ENCODE measurements at regions of chr22 and their contacts with region 1.

Region 1: DNA sequence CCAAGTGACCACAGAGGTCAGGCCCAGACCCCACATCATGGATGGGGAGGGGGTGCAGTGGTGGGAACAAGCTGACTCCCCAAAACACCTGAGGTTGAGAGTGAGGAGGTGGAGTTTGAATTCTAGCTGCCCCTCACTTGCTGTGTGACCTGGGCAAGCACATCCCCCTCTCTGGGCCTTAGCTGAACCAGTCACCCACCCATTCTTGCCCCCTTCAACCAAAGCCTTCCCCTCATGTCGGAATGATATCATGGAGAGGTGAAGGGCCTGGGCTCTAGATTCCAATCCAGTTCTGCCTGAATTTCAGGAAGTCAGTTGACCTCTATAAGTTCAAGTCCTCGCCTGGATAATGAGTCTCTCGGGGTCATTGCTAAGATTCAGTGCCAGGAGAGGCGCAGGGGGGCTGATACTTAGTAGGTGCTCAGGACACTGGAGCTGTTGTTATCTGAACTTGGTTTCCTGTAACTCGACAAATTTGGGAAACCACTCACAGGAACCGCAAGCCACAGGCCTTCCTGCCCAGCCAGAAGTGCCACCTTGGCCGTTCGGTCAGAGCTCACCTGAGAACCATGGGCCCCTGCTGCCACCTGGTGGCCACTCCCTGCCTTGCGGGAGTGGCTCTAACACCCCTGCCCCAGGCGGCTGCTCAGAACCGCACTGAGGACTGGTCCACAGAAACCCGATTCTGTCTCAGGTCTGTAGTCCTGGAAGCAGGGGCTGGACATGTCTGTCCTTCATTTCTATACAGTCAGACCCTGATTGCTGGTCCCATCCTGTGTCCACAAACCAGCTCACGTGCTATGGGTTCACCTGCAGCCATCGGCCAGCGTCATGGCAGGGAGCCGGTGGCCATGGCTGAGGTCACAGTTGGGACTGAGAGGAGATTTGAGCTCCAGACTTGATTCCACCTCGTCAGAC is 6.9 kb downstream of the CDC42EP1 start:
- DNase-seq: peak; percentile 91
- ATAC-seq: peak; percentile 93
- H3K4me3 ChIP-seq: peak overlapping the region in 2 of 5 experiments; percentile 4 to 40
- H3K4me3 Mint-ChIP-seq: peak overlapping the region; percentile 74
- H3K27ac ChIP-seq: peak overlapping the region; percentile 25 to 44
- H3K27ac Mint-ChIP-seq: peak overlapping the region; percentile 68
- H3K4me1 ChIP-seq: peaks cover 22 to 27% of the 10 kb centered on the region in 2 donors
- H3K4me1 Mint-ChIP-seq: peaks cover 22% of the 10 kb centered on the region
- H3K27me3 ChIP-seq: peaks cover 0 to 22% (median 8%) of the 10 kb centered on the region in 4 experiments
- H3K27me3 Mint-ChIP-seq: peaks cover 30% of the 10 kb centered on the region
- CTCF ChIP-seq: peak; percentile 95

Region 2: DNA sequence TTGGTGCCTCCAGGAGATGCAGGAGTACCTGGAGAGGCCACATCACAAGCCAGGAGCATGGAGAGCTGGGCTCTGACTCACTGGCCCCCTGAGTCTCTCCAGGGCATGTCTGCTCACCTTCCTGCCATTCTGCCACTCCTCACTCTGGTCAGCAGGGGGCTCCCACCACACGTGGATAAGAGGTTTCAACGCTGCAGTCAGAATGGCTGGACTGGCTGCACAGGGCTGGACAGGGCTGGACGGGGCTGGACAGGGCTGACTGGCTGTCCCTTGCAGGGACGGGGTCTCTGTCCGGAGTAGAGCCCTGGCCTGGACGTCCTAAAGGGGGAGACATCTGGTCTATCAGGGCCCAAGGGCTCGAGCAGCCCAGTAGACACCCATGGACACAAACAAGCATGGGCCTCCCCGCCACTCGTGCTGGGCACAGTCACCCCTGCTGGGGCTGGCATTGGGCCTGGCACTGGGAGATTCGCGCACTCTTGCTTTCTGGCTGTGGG is 250.2 kb before region 1 on chr22:
- CTCF ChIA-PET with region 1: interaction called, 26 read pairs
- POLR2A ChIA-PET with region 1: no interaction called
- intact Hi-C with region 1: loop called (anchors 1 kb)
- DNase-seq: peak; percentile 83
- ATAC-seq: peak; percentile 86
- H3K4me3 ChIP-seq: no peak overlapping the region
- H3K4me3 Mint-ChIP-seq: no peak overlapping the region
- H3K27ac ChIP-seq: no peak overlapping the region
- H3K27ac Mint-ChIP-seq: no peak overlapping the region
- H3K4me1 ChIP-seq: peaks cover 20 to 29% of the 10 kb centered on the region in 2 donors
- H3K4me1 Mint-ChIP-seq: peaks cover 32% of the 10 kb centered on the region
- H3K27me3 ChIP-seq: peaks cover 0 to 3% (median 0%) of the 10 kb centered on the region in 4 experiments
- H3K27me3 Mint-ChIP-seq: peaks cover 12% of the 10 kb centered on the region
- CTCF ChIP-seq: peak; percentile 85

Region 3: GRCh38 chr22:37472418-37473006 is 94.7 kb before region 1 on chr22:
- CTCF ChIA-PET with region 1: interaction called, 56 read pairs
- POLR2A ChIA-PET with region 1: no interaction called
- intact Hi-C with region 1: loop called (anchors 1 kb)
- DNase-seq: peak; percentile 53
- ATAC-seq: no peak
- H3K4me3 ChIP-seq: no peak overlapping the region
- H3K4me3 Mint-ChIP-seq: no peak overlapping the region
- H3K27ac ChIP-seq: no peak overlapping the region
- H3K27ac Mint-ChIP-seq: no peak overlapping the region
- H3K4me1 ChIP-seq: no peaks in the 10 kb centered on the region
- H3K4me1 Mint-ChIP-seq: peaks cover 10% of the 10 kb centered on the region
- H3K27me3 ChIP-seq: no peaks in the 10 kb centered on the region
- H3K27me3 Mint-ChIP-seq: no peaks in the 10 kb centered on the region
- CTCF ChIP-seq: peak; percentile 60

Region 4: GRCh38 chr22:37538590-37539357 is 28.4 kb before region 1 on chr22:
- CTCF ChIA-PET with region 1: interaction called, 278 read pairs
- POLR2A ChIA-PET with region 1: interaction called, 12 read pairs
- intact Hi-C with region 1: loop called (anchors 1 kb)
- DNase-seq: peak; percentile 90
- ATAC-seq: peak; percentile 100
- H3K4me3 ChIP-seq: no peak overlapping the region
- H3K4me3 Mint-ChIP-seq: peak overlapping the region; percentile 32
- H3K27ac ChIP-seq: no peak overlapping the region
- H3K27ac Mint-ChIP-seq: peak overlapping the region; percentile 21
- H3K4me1 ChIP-seq: peaks cover 20 to 29% of the 10 kb centered on the region in 2 donors
- H3K4me1 Mint-ChIP-seq: peaks cover 24% of the 10 kb centered on the region
- H3K27me3 ChIP-seq: peaks cover 0 to 6% (median under 1%) of the 10 kb centered on the region in 4 experiments
- H3K27me3 Mint-ChIP-seq: peaks cover 22% of the 10 kb centered on the region
- CTCF ChIP-seq: peak; percentile 98

Region 5: GRCh38 chr22:37552524-37553163 is 14.5 kb before region 1 on chr22:
- CTCF ChIA-PET with region 1: interaction called, 30 read pairs
- POLR2A ChIA-PET with region 1: no interaction called
- intact Hi-C with region 1: no loop called
- DNase-seq: no peak
- ATAC-seq: no peak
- H3K4me3 ChIP-seq: no peak overlapping the region
- H3K4me3 Mint-ChIP-seq: no peak overlapping the region
- H3K27ac ChIP-seq: no peak overlapping the region
- H3K27ac Mint-ChIP-seq: peak overlapping the region; percentile 56
- H3K4me1 ChIP-seq: no peaks in the 10 kb centered on the region
- H3K4me1 Mint-ChIP-seq: no peaks in the 10 kb centered on the region
- H3K27me3 ChIP-seq: peaks cover 0 to 33% (median 4%) of the 10 kb centered on the region in 4 experiments
- H3K27me3 Mint-ChIP-seq: peaks cover 37% of the 10 kb centered on the region
- CTCF ChIP-seq: no peak

Region 6: GRCh38 chr22:37588546-37589215 is 21.5 kb after region 1 on chr22:
- CTCF ChIA-PET with region 1: interaction called, 43 read pairs
- POLR2A ChIA-PET with region 1: no interaction called
- intact Hi-C with region 1: no loop called
- DNase-seq: no peak
- ATAC-seq: no peak
- H3K4me3 ChIP-seq: no peak overlapping the region
- H3K4me3 Mint-ChIP-seq: no peak overlapping the region
- H3K27ac ChIP-seq: no peak overlapping the region
- H3K27ac Mint-ChIP-seq: no peak overlapping the region
- H3K4me1 ChIP-seq: peaks cover 4 to 9% of the 10 kb centered on the region in 2 donors
- H3K4me1 Mint-ChIP-seq: peaks cover 11% of the 10 kb centered on the region
- H3K27me3 ChIP-seq: peaks cover 0 to 8% (median 0%) of the 10 kb centered on the region in 4 experiments
- H3K27me3 Mint-ChIP-seq: peaks cover 29% of the 10 kb centered on the region
- CTCF ChIP-seq: no peak